ENCODE measurements at regions of chr1 and their contacts with region 1.

Region 1: GRCh38 chr1:171485375-171486047 is at the start of gene PRRC2C:
- DNase-seq: peak; percentile 96
- ATAC-seq: peak; percentile 88
- H3K4me3 Mint-ChIP-seq: peak within 1 kb of the TSS; percentile 81
- H3K27ac Mint-ChIP-seq: peak within 1 kb of the TSS; percentile 92
- H3K4me1 Mint-ChIP-seq: peaks cover 42% of the 10 kb centered on the region
- H3K27me3 Mint-ChIP-seq: no peaks in the 10 kb centered on the region
- CTCF ChIP-seq: peak; percentile 8
- total RNA-seq, gene PRRC2C: 229 to 238 TPM

Region 2: DNA sequence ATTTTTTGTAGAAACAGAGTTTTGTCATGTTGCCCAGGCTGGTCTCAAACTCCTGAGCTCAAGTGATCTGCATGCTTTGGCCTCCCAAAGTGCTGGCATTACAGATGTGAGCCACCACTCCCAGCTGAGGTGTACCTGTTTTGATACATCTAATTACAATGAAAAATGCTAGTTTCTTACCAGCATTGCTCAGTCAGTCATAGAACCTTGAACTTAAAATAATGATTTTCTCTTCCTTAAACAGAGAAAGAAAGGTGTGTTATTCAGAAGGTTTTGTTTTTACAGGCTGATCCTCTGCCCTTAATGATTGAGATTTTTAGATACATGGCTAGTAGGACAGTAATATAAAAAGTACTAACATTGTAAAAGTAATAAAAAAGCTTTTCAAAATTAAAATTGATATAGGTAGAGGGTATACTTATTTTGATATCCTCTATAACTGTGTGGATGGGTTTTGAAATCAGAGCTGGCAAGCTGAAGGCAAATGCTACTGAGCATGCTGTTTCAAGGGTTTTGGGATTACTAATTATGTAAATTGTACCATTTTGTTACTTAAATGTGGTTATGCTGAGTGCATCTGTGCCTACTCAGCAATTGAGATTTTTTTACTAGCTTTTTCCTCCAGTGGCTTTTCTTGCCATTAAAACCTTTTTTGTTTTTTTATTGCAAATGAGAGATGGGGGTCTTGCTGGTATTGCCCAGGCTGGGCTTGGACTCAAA is 16.0 kb after region 1 on chr1:
- CTCF ChIA-PET with region 1: interaction called, 24 read pairs
- POLR2A ChIA-PET with region 1: interaction called, 28 read pairs
- intact Hi-C with region 1: loop called (anchors 2 kb)
- DNase-seq: no peak
- ATAC-seq: peak; percentile 82
- H3K4me3 Mint-ChIP-seq: no peak overlapping the region
- H3K27ac Mint-ChIP-seq: peak overlapping the region; percentile 76
- H3K4me1 Mint-ChIP-seq: peaks cover 89% of the 10 kb centered on the region
- H3K27me3 Mint-ChIP-seq: no peaks in the 10 kb centered on the region
- CTCF ChIP-seq: no peak

Region 3: DNA sequence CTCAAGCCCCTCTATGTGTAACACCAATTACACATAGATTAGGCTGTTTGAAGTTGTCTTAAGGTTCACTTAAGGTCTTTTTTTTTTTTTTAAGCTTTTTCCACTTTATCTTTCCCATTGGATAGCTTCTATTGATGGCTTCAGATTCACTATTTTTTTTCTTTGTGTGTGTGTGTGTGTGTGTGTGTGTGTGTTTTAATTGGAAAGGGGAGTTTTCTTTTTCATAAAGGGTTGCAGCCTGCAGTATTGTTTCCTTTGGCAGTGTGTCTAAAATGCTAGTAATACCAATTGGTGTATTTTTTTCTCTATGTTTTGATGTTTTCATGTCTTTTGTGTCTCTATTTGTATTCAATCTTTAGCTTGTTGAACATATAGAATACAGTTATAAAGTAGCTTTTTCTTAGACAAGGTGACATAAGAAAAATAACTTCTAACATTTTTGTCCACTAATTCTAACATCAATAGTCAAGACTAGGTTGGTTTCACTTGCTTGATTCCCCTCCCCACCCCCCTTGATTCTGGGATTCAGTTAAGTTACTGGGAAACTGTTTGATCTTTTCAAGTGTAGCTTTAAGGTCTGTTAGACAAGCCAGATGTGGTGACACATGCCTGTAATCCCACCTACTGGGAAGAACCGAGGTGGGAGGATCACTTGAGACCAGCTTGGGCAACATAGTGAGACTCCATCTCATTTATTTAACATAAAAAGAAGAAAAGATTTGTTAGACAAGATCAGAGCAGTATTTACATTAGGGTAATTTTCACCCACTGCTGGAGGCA is 21.2 kb after region 1 on chr1:
- CTCF ChIA-PET with region 1: interaction called, 24 read pairs
- POLR2A ChIA-PET with region 1: interaction called, 28 read pairs
- intact Hi-C with region 1: loop called (anchors 2 kb)
- DNase-seq: no peak
- ATAC-seq: peak; percentile 34
- H3K4me3 Mint-ChIP-seq: no peak overlapping the region
- H3K27ac Mint-ChIP-seq: peak overlapping the region; percentile 62
- H3K4me1 Mint-ChIP-seq: peaks cover 91% of the 10 kb centered on the region
- H3K27me3 Mint-ChIP-seq: no peaks in the 10 kb centered on the region
- CTCF ChIP-seq: no peak

Region 4: GRCh38 chr1:171515299-171515698 is 29.8 kb after region 1 on chr1:
- CTCF ChIA-PET with region 1: interaction called, 32 read pairs
- POLR2A ChIA-PET with region 1: interaction called, 6 read pairs
- intact Hi-C with region 1: no loop called
- DNase-seq: no peak
- ATAC-seq: peak; percentile 53
- H3K4me3 Mint-ChIP-seq: no peak overlapping the region
- H3K27ac Mint-ChIP-seq: peak overlapping the region; percentile 69
- H3K4me1 Mint-ChIP-seq: peaks cover 44% of the 10 kb centered on the region
- H3K27me3 Mint-ChIP-seq: no peaks in the 10 kb centered on the region
- CTCF ChIP-seq: no peak